Activated CD4-positive, alpha-beta T cell treated with anti-CD3 and anti-CD28 coated beads for 36 hours (primary cell): ENCODE measurements at regions of chr19 and their contacts with region 1.

Region 1: GRCh38 chr19:15379083-15379995 is at the start of gene AKAP8:
- DNase-seq: peak; percentile 99
- ATAC-seq: peak; percentile 91
- H3K4me3 Mint-ChIP-seq: peak within 1 kb of the TSS; percentile 88
- H3K27ac Mint-ChIP-seq: peak within 1 kb of the TSS; percentile 100
- H3K4me1 Mint-ChIP-seq: peaks cover 37% of the 10 kb centered on the region
- H3K27me3 Mint-ChIP-seq: no peaks in the 10 kb centered on the region
- total RNA-seq, gene AKAP8: 47.9 to 54.3 TPM

Region 2: DNA sequence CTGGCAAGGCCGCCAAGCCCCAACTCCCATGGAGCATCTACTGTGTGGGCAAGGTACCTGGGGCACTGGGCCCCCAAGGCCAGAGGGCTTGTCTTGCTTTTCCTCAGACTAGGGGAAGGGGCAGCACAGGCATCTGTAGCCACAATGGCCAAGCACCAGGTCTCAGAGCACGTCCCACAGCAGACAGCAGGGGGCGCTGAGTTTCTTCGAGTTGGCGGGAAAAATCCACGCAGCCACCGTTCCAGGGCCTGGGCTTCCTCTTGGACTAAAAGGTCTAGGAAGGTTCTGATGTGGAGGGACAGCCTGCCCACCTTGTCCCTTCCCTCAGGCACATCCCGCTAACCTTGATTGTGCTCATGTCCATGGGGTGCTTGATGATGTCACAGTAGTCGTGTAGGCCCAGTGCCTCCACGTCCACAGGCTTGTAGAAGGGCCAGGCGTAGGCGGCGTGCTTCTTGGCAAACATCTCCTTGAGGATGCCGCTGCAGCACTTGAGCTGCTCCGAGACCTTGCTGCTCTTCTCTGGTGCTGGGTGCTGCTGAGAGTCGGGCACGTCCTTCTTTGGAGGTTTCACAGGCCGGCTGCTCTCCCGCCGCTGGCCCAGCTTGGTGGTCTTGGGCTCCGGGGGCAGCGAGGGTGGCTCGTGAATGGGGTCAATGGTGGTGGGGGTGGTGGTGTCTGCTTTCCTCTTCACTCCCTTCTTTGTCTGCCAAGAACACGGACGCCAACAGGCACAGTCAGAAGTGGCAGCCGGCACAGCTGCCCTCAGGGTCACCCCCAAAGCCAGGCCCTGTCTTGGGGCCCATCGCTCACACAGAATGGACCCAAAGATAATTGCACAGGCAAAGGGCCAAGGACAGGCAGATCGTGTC is 115.0 kb before region 1 on chr19:
- CTCF ChIA-PET with region 1: interaction called, 3 read pairs
- POLR2A ChIA-PET with region 1: no interaction called
- intact Hi-C with region 1: loop called (anchors 2 to 5 kb)
- DNase-seq: peak; percentile 86
- ATAC-seq: peak; percentile 77
- H3K4me3 Mint-ChIP-seq: no peak overlapping the region
- H3K27ac Mint-ChIP-seq: no peak overlapping the region
- H3K4me1 Mint-ChIP-seq: peaks cover 8% of the 10 kb centered on the region
- H3K27me3 Mint-ChIP-seq: no peaks in the 10 kb centered on the region

Region 3: GRCh38 chr19:15297416-15298224 is 81.7 kb before region 1 on chr19:
- CTCF ChIA-PET with region 1: interaction called, 4 read pairs
- POLR2A ChIA-PET with region 1: interaction called, 4 read pairs
- intact Hi-C with region 1: loop called in 1 of 2 experiments (anchors 2 kb)
- DNase-seq: peak; percentile 55
- ATAC-seq: no peak
- H3K4me3 Mint-ChIP-seq: peak overlapping the region; percentile 30
- H3K27ac Mint-ChIP-seq: peak overlapping the region; percentile 91
- H3K4me1 Mint-ChIP-seq: peaks cover 97% of the 10 kb centered on the region
- H3K27me3 Mint-ChIP-seq: no peaks in the 10 kb centered on the region

Region 4: GRCh38 chr19:15432629-15433518 is 53.5 kb after region 1 on chr19:
- CTCF ChIA-PET with region 1: no interaction called
- POLR2A ChIA-PET with region 1: interaction called, 5 read pairs
- intact Hi-C with region 1: loop called in 1 of 2 experiments (anchors 1 kb)
- DNase-seq: peak; percentile 97
- ATAC-seq: peak; percentile 87
- H3K4me3 Mint-ChIP-seq: peak overlapping the region; percentile 87
- H3K27ac Mint-ChIP-seq: peak overlapping the region; percentile 91
- H3K4me1 Mint-ChIP-seq: peaks cover 26% of the 10 kb centered on the region
- H3K27me3 Mint-ChIP-seq: no peaks in the 10 kb centered on the region

Region 5: GRCh38 chr19:16197622-16198369 is 818.5 kb after region 1 on chr19 and contains the start of gene AP1M1:
- CTCF ChIA-PET with region 1: no interaction called
- POLR2A ChIA-PET with region 1: no interaction called
- intact Hi-C with region 1: loop called in 1 of 2 experiments (anchors 1 kb)
- DNase-seq: peak; percentile 99
- ATAC-seq: peak; percentile 95
- H3K4me3 Mint-ChIP-seq: peak within 1 kb of the TSS; percentile 83
- H3K27ac Mint-ChIP-seq: peak within 1 kb of the TSS; percentile 96
- H3K4me1 Mint-ChIP-seq: peaks cover 33% of the 10 kb centered on the region
- H3K27me3 Mint-ChIP-seq: no peaks in the 10 kb centered on the region
- total RNA-seq, gene AP1M1: 61.8 to 92.0 TPM